ENCODE measurements at regions of chr15 and their contacts with region 1.

Region 1: GRCh38 chr15:77821188-77821958 is 188.7 kb upstream of the LINGO1 start:
- DNase-seq: peak; percentile 44 to 75 (median 48)
- ATAC-seq: peak; percentile 37 to 88 (median 76)
- H3K4me3 ChIP-seq: no peak overlapping the region
- H3K27ac ChIP-seq: no peak overlapping the region
- H3K4me1 ChIP-seq: peaks cover 0 to 23% (median 0%) of the 10 kb centered on the region in 12 donors
- H3K27me3 ChIP-seq: peaks cover 26 to 59% (median 34%) of the 10 kb centered on the region in 9 donors
- CTCF ChIP-seq: peak; percentile 40 to 76 (median 62)
- POLR2A ChIP-seq: no peak

Region 2: GRCh38 chr15:77659350-77660321 is 161.7 kb before region 1 on chr15:
- intact Hi-C with region 1: loop called in 2 of 10 experiments (anchors 2 to 10 kb)
- DNase-seq: peak; percentile 33 to 64 (median 52)
- ATAC-seq: peak in 3 of 4 donors; percentile 55 to 76 (median 70)
- H3K4me3 ChIP-seq: no peak overlapping the region
- H3K27ac ChIP-seq: no peak overlapping the region
- H3K4me1 ChIP-seq: peaks cover 0 to 3% (median 0%) of the 10 kb centered on the region in 12 donors
- H3K27me3 ChIP-seq: peaks cover 0 to 34% (median 0%) of the 10 kb centered on the region in 9 donors
- CTCF ChIP-seq: peak; percentile 24 to 67 (median 47)
- POLR2A ChIP-seq: no peak